ENCODE measurements at regions of chr10 and their contacts with region 1.

Region 1: DNA sequence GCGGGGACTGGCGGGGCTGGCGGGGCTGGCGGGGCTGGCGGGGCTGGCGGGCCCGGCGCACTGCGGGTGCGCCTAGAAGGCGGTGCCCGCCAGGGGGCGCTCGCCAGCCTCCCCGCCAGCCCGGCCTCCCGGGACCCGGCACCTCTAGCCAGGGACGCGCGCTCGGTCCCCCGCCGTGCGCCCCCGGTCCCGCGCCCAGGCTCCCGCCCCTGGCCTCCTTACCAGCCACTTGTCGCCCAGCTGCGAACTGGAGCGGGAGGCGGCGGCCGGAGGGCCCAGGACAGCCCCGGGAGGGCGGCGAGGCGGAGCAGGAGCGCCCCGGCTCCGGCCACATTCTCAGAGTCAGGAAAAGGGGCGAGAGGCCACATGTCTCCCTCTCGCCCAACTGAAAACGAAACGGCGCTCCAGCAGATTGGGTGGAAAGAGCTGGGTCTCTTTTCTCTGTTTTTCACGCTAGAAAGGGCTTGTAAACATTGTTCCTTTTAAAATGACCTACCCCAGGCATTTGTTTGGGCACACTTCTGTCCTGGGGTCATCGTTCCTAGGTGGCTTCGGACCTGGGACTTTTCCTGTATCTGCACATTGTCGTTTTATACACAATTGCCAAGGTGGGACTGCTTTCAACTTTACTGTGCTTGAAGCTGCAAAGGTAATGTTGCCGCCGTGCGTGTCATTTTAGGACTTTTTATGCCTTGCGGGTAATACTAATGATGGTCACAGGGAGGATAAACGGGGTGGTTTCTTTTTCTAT is 378 bp upstream of the PRKCQ start:
- DNase-seq: peak; percentile 67 to 95 (median 88)

Region 2: GRCh38 chr10:6445501-6446316 is 134.7 kb before region 1 on chr10:
- intact Hi-C with region 1: loop called (anchors 10 kb)
- DNase-seq: peak; percentile 21 to 90 (median 76)

Region 3: GRCh38 chr10:6647811-6648526 is 67.5 kb after region 1 on chr10:
- intact Hi-C with region 1: loop called (anchors 2 kb)
- DNase-seq: peak; percentile 15 to 93 (median 74)

Region 4: DNA sequence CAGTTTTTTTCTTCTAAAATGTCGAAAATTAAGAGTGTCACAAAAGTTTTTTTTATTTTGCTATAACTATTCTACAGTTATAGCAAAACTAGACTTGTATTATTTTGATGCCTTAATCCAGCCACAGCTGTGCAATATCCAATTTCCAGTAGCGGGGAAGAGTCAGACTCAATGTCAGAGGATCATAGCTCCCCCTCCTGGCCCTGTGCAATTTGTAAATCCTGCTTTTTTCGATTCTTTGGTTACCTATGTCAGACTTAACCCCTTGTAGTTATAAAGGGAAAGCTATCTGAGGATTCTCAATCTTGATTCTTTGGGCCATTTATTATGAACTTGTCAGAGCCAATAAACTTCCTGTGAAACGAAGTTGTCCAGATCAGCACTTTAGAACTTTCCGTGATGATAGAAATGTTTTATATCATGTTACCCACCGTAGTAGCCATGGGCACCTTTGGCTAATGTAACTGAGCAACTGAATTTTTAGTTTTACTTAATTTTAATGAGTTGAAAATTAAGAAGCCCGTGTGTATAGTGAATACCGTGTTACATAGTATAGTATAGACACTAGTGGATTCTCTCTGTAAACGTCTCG is 87.3 kb after region 1 on chr10:
- intact Hi-C with region 1: loop called (anchors 5 kb)
- DNase-seq: peak in 41 of 42 donors; percentile 7 to 90 (median 65)

Measured in head of caudate nucleus (tissue), 42 donors.